Right ventricle myocardium inferior (tissue), 1 donor: ENCODE measurements at regions of chr1 and their contacts with region 1.

Region 1: DNA sequence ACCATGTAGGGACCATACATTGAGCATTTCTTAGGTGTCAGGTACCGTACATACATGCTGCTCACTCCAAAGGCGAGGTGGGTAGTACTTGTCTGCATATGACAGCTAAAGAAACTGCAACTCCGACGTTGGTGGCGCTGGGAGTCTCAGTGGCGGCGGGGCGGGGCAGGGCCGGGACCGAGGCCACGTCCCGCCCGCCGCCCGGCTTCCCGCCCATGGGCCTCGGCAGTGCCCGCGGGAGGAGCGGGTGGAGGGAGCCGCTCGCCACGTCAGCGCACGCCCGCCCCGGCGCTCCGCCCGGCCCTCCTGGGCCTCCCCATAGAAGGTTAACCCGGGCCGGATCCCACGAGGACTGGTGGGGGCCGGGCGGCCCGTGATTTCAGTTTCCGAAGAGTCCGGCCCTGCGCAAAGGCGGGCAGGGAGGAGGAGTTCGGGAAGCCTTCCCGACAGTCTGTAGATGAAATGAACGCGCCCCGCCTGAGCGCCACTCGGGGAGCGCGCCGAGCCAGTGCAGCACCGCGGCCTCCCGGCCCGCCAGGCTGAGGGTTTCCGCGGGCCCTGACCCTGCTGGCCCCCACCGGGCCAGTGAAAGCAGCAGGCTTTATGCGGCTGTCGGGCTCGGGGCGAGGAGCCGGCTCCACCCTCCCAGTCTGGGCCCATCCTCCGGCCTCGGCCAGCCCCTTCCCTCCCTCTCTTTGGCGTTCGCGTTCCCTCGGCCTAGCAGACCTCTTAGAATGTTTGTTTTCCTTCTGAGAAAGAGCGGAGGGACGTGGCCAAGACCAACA is 119.9 kb upstream of the JUN start:
- DNase-seq: peak; percentile 98
- ATAC-seq: peak; percentile 96

Region 2: GRCh38 chr1:58792846-58793245 is 110.9 kb before region 1 on chr1:
- intact Hi-C with region 1: no loop called
- DNase-seq: no peak
- ATAC-seq: no peak

Region 3: GRCh38 chr1:58857680-58858673 is 45.7 kb before region 1 on chr1:
- intact Hi-C with region 1: no loop called
- DNase-seq: no peak
- ATAC-seq: no peak

Region 4: DNA sequence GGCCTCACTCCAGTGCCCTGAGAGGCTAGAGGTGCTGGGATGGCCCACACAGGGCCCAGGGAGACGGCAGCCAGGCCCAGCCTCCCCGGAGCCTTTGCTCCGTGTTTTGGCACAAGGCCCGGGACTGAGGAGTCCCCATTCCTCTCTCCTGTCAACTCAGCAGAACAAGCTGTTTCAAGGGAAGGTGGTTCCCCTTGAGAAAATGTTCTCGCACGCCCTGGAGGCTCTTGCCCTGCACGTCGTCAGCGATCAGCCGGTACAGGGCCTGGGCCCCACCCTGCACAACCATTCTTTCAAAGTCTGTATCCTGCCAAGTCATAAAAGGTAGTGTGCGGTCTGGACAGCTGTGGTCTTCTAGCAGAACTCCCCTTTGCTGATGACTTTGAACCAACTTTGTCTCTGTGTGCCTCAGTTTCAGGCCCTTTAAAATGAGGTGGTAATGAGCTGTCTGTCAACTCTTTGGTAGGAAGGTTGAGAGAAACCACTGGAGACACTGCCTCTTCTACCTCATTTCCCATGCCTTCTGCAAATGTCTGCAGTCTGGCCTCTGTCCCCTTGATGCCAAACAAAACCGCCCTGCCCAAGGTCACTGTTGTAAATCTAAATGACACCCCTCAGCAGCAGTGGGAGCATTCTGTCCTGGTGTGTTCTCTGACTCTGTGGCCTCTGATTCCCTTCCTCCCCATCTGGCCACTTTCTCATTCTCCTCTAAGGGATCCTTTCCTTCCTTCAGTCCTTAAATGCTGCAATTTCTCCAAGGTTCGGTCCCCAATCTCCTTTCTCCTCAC is 18.8 kb after region 1 on chr1:
- intact Hi-C with region 1: loop called (anchors 1 kb)
- DNase-seq: peak; percentile 72
- ATAC-seq: peak; percentile 90

Region 5: GRCh38 chr1:58968360-58968952 is 64.8 kb after region 1 on chr1:
- intact Hi-C with region 1: loop called (anchors 2 kb)
- DNase-seq: peak; percentile 88
- ATAC-seq: peak; percentile 73

Region 6: GRCh38 chr1:59143133-59143487 is 239.4 kb after region 1 on chr1:
- intact Hi-C with region 1: loop called (anchors 5 kb)
- DNase-seq: no peak
- ATAC-seq: no peak

Region 7: DNA sequence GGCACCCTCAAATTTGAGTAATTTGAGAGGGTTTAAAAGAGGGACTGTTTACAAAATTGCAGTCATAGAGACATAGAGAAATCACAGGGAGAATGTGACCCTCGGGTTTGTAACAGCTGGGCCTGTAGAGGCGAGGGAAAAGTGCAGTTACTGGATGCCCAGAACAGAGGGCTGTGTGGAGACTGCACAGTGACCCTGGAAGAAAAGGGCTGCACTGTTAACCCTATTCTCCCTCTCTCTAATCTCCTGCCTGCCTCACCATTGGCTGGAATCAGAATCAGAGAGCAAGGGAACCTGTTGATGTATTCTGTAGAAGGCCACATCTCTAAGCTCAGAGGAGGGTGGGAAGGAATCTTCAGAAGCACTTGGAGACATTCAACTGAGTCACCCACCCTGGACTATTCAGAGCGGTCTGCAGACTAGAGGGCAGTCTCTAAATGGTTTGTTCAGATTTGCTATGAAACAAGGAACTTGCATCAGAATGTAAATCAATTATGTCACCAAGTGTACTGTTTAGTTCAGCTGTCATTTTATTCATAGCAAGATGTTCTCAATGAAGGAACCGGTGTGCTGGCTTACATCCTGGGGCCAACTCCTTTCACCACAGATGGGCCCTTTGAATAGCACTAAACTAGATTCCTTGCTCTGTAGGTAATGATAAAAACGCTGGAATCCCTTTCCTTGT is 778.8 kb after region 1 on chr1:
- intact Hi-C with region 1: no loop called
- DNase-seq: no peak
- ATAC-seq: no peak

Region 8: GRCh38 chr1:59699227-59699847 is 795.6 kb after region 1 on chr1:
- intact Hi-C with region 1: loop called (anchors 5 kb)
- DNase-seq: no peak
- ATAC-seq: no peak